Ovary (tissue), 10 donors: ENCODE measurements at regions of chr1 and their contacts with region 1.

Region 1: GRCh38 chr1:116853670-116854402 is 55.9 kb upstream of the PTGFRN start:
- DNase-seq: no peak
- H3K4me3 ChIP-seq: no peak overlapping the region
- H3K27ac ChIP-seq: no peak overlapping the region
- H3K4me1 ChIP-seq: peaks cover 4% of the 10 kb centered on the region
- H3K27me3 ChIP-seq: no peaks in the 10 kb centered on the region
- CTCF ChIP-seq: no peak
- EP300 ChIP-seq: no peak
- POLR2A ChIP-seq: no peak

Region 2: GRCh38 chr1:116654355-116654754 is 199.5 kb before region 1 on chr1:
- intact Hi-C with region 1: no loop called
- DNase-seq: no peak
- H3K4me3 ChIP-seq: no peak overlapping the region
- H3K27ac ChIP-seq: no peak overlapping the region
- H3K4me1 ChIP-seq: no peaks in the 10 kb centered on the region
- H3K27me3 ChIP-seq: no peaks in the 10 kb centered on the region
- CTCF ChIP-seq: no peak
- EP300 ChIP-seq: no peak
- POLR2A ChIP-seq: no peak

Region 3: GRCh38 chr1:116804736-116805135 is 49.1 kb before region 1 on chr1:
- intact Hi-C with region 1: no loop called
- DNase-seq: no peak
- H3K4me3 ChIP-seq: no peak overlapping the region
- H3K27ac ChIP-seq: no peak overlapping the region
- H3K4me1 ChIP-seq: no peaks in the 10 kb centered on the region
- H3K27me3 ChIP-seq: no peaks in the 10 kb centered on the region
- CTCF ChIP-seq: no peak
- EP300 ChIP-seq: no peak
- POLR2A ChIP-seq: no peak

Region 4: DNA sequence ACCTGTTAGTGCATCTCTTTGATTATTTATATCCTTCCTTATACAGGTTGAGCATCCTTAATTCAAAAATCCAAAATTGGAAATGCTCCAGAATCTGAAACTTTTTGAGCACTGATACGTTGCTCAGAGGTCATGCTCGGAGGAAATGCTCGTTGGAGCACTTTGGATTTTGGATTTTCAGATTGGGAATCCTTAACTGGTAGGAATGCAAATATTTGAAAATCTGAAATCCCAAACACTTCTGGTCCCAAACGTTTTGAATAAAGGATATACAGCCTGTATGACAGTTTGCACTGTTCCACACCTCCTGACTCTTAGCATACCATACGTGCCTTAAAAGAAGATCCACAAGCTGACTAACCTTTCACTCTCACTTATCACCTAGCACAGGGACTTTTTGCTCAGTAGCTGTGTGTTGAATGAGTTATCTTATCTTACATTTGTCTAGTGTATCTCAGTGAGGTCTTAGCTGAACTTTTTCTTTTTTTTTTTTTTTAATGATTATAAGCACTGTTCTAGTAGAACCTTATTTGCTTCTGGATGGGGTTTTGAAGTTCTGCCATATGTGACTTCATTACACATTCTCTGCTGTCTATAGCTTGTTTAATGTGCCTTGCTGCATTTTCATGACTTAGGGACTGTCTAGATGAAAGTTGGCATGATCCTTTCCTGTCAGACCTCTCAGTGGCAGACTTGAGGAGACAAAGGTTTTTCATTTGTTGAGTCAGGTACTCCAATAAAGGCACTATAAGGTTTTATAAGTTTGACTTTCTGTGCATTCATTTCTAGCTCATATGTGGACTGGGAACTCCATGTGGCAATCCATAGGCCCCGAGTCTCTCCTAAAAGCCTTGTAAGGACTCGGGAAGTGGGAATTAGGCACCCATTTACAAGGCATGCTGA is 77.4 kb after region 1 on chr1:
- intact Hi-C with region 1: no loop called
- DNase-seq: no peak
- H3K4me3 ChIP-seq: no peak overlapping the region
- H3K27ac ChIP-seq: no peak overlapping the region
- H3K4me1 ChIP-seq: no peaks in the 10 kb centered on the region
- H3K27me3 ChIP-seq: no peaks in the 10 kb centered on the region
- CTCF ChIP-seq: no peak
- EP300 ChIP-seq: no peak
- POLR2A ChIP-seq: no peak

Region 5: GRCh38 chr1:116943438-116943837 is 89.6 kb after region 1 on chr1:
- intact Hi-C with region 1: loop called in 1 of 4 experiments (anchors 5 kb)
- DNase-seq: no peak
- H3K4me3 ChIP-seq: no peak overlapping the region
- H3K27ac ChIP-seq: no peak overlapping the region
- H3K4me1 ChIP-seq: peaks cover 2% of the 10 kb centered on the region
- H3K27me3 ChIP-seq: no peaks in the 10 kb centered on the region
- CTCF ChIP-seq: no peak
- EP300 ChIP-seq: no peak
- POLR2A ChIP-seq: no peak

Region 6: DNA sequence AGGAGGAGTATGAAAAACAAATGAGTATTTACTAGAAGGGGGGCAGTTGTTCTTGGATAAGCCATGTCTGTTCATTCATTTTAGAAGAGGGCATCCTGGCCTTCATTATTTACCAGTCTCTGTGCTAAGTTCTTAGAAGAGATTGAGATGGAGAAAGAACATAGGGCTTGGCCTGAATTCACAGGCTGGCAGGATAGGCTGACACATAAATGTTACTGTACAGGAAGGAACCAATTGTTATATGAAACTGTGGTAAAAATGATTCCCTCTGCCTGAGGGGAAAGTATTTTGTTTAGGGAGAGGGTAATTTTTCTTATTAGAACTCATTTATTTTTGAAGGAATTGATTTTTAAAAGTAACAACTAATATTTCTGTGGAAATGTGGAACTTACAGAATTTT is 612.9 kb after region 1 on chr1:
- intact Hi-C with region 1: no loop called
- DNase-seq: no peak
- H3K4me3 ChIP-seq: no peak overlapping the region
- H3K27ac ChIP-seq: no peak overlapping the region
- H3K4me1 ChIP-seq: no peaks in the 10 kb centered on the region
- H3K27me3 ChIP-seq: no peaks in the 10 kb centered on the region
- CTCF ChIP-seq: no peak
- EP300 ChIP-seq: no peak
- POLR2A ChIP-seq: no peak